Naive thymus-derived CD4-positive, alpha-beta T cell (primary cell): ENCODE measurements at regions of chr16 and their contacts with region 1.

Region 1: GRCh38 chr16:28924732-28925385 is at the start of gene RABEP2:
- DNase-seq: peak; percentile 89 to 100 (median 96)
- ATAC-seq: peak; percentile 89
- H3K4me3 ChIP-seq: peak within 1 kb of the TSS; percentile 74
- H3K4me3 Mint-ChIP-seq: peak within 1 kb of the TSS; percentile 89 to 97 (median 94)
- H3K27ac ChIP-seq: peak within 1 kb of the TSS; percentile 99
- H3K27ac Mint-ChIP-seq: peak within 1 kb of the TSS; percentile 97 to 99 (median 99)
- H3K4me1 ChIP-seq: peaks cover 7 to 8% of the 10 kb centered on the region in 2 donors
- H3K4me1 Mint-ChIP-seq: peaks cover 15 to 24% (median 19%) of the 10 kb centered on the region in 7 donors
- H3K27me3 ChIP-seq: no peaks in the 10 kb centered on the region
- H3K27me3 Mint-ChIP-seq: no peaks in the 10 kb centered on the region
- total RNA-seq, gene RABEP2: 19.9 to 30.3 (median 27.3) TPM

Region 2: GRCh38 chr16:28846080-28846932 is 78.6 kb before region 1 on chr16 and contains the start of gene TUFM:
- CTCF ChIA-PET with region 1: interaction called, 4 read pairs
- POLR2A ChIA-PET with region 1: interaction called, 5 read pairs
- intact Hi-C with region 1: loop called (anchors 1 kb)
- DNase-seq: peak; percentile 88 to 99 (median 98)
- ATAC-seq: peak; percentile 98
- H3K4me3 ChIP-seq: peak within 1 kb of the TSS; percentile 88
- H3K4me3 Mint-ChIP-seq: peak within 1 kb of the TSS; percentile 91 to 98 (median 96)
- H3K27ac ChIP-seq: peak within 1 kb of the TSS; percentile 94
- H3K27ac Mint-ChIP-seq: peak within 1 kb of the TSS; percentile 91 to 98 (median 94)
- H3K4me1 ChIP-seq: peaks cover 19 to 25% of the 10 kb centered on the region in 2 donors
- H3K4me1 Mint-ChIP-seq: peaks cover 17 to 38% (median 27%) of the 10 kb centered on the region in 7 donors
- H3K27me3 ChIP-seq: no peaks in the 10 kb centered on the region
- H3K27me3 Mint-ChIP-seq: no peaks in the 10 kb centered on the region
- total RNA-seq, gene TUFM: 89.7 to 140 (median 95.2) TPM

Region 3: GRCh38 chr16:28879841-28880588 is 44.8 kb before region 1 on chr16:
- CTCF ChIA-PET with region 1: no interaction called
- POLR2A ChIA-PET with region 1: interaction called, 8 read pairs
- intact Hi-C with region 1: loop called (anchors 1 kb)
- DNase-seq: peak; percentile 64 to 89 (median 78)
- ATAC-seq: peak; percentile 99
- H3K4me3 ChIP-seq: peak overlapping the region; percentile 92
- H3K4me3 Mint-ChIP-seq: peak overlapping the region; percentile 82 to 93 (median 88)
- H3K27ac ChIP-seq: peak overlapping the region; percentile 69
- H3K27ac Mint-ChIP-seq: peak overlapping the region in 4 of 9 donors; percentile 14 to 70 (median 43)
- H3K4me1 ChIP-seq: peaks cover 0 to 16% of the 10 kb centered on the region in 2 donors
- H3K4me1 Mint-ChIP-seq: peaks cover 0 to 19% (median 15%) of the 10 kb centered on the region in 7 donors
- H3K27me3 ChIP-seq: no peaks in the 10 kb centered on the region
- H3K27me3 Mint-ChIP-seq: peaks cover 3 to 14% (median 9%) of the 10 kb centered on the region in 5 donors

Region 4: GRCh38 chr16:28943281-28943680 is 18.4 kb after region 1 on chr16:
- CTCF ChIA-PET with region 1: interaction called, 11 read pairs
- POLR2A ChIA-PET with region 1: interaction called, 4 read pairs
- intact Hi-C with region 1: loop called in 1 of 2 experiments (anchors 1 kb)
- DNase-seq: no peak
- ATAC-seq: no peak
- H3K4me3 ChIP-seq: no peak overlapping the region
- H3K4me3 Mint-ChIP-seq: no peak overlapping the region
- H3K27ac ChIP-seq: no peak overlapping the region
- H3K27ac Mint-ChIP-seq: no peak overlapping the region
- H3K4me1 ChIP-seq: peaks cover 0 to 8% of the 10 kb centered on the region in 2 donors
- H3K4me1 Mint-ChIP-seq: peaks cover 7 to 19% (median 8%) of the 10 kb centered on the region in 7 donors
- H3K27me3 ChIP-seq: no peaks in the 10 kb centered on the region
- H3K27me3 Mint-ChIP-seq: peaks cover 0 to 10% (median 0%) of the 10 kb centered on the region in 5 donors

Region 5: DNA sequence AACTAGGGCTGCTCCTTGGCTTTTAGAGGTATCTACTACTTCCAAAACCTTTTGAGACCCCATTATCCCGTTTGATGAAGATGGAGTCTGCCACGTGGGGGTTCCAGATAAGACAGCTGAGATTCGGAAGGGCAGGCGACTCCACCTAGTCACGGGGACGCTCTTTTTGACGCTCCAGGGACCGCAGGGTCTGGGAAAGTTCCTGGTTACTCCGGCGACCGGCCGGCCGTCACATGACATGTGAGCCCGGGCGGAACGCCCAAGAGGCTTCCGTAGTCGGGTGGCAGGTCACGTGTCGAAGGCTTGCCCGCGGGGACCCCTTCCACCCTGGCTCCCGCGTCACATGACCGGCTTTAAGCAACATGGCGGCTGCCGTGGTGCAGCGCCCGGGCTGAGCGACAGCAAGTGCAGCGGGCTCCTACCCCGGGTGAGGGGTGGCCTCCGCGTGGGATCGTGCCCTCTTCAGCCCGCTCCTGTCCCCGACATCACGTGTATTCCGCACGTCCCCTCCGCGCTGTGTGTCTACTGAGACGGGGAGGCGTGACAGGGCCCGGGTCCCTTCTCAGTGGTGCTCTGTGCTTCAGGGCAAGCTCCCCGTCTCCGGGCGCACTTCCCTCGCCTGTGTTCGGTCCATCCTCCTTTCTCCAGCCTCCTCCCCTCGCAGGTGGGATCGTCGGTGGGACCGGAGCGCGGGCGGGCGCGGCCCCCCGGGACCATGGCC is 49.7 kb after region 1 on chr16 and contains the start of gene SPNS1:
- CTCF ChIA-PET with region 1: no interaction called
- POLR2A ChIA-PET with region 1: interaction called, 3 read pairs
- intact Hi-C with region 1: loop called in 1 of 2 experiments (anchors 2 kb)
- DNase-seq: peak; percentile 77 to 96 (median 87)
- ATAC-seq: peak; percentile 95
- H3K4me3 ChIP-seq: peak within 1 kb of the TSS; percentile 80
- H3K4me3 Mint-ChIP-seq: peak within 1 kb of the TSS; percentile 96 to 99 (median 98)
- H3K27ac ChIP-seq: peak within 1 kb of the TSS; percentile 75
- H3K27ac Mint-ChIP-seq: peak within 1 kb of the TSS; percentile 91 to 99 (median 96)
- H3K4me1 ChIP-seq: peaks cover 5 to 12% of the 10 kb centered on the region in 2 donors
- H3K4me1 Mint-ChIP-seq: peaks cover 30 to 48% (median 41%) of the 10 kb centered on the region in 7 donors
- H3K27me3 ChIP-seq: no peaks in the 10 kb centered on the region
- H3K27me3 Mint-ChIP-seq: no peaks in the 10 kb centered on the region
- total RNA-seq, gene SPNS1: 31.1 to 47.0 (median 42.1) TPM